Ovary (tissue), 10 donors: ENCODE measurements at regions of chr9 and their contacts with region 1.

Region 1: GRCh38 chr9:27333241-27334052 is 36.5 kb upstream of the EQTN start:
- DNase-seq: peak; percentile 66 to 71 (median 67)
- H3K4me3 ChIP-seq: no peak overlapping the region
- H3K27ac ChIP-seq: no peak overlapping the region
- H3K4me1 ChIP-seq: peaks cover 17% of the 10 kb centered on the region
- H3K27me3 ChIP-seq: no peaks in the 10 kb centered on the region
- CTCF ChIP-seq: peak; percentile 77 to 87 (median 83)
- EP300 ChIP-seq: no peak
- POLR2A ChIP-seq: no peak

Region 2: DNA sequence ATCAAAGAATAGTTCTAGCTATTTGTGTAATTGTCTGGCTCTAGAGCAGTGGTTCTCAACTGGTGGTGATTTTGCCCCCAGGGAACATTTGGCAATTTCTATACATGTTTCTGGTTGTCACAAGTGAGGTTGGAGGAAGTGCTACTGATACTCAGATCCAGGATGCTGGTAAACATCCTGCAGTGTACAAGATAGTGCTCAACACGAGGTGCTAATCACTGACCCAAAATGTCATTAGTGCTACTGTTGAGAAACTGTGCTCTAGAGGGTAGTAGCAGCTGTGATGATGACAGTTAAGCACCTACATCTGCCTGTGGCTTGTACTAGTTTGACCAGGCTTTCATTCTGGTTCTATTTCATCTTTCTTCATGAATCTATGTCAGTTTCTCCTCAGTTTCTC is 350.1 kb before region 1 on chr9:
- intact Hi-C with region 1: no loop called
- DNase-seq: no peak
- H3K4me3 ChIP-seq: no peak overlapping the region
- H3K27ac ChIP-seq: no peak overlapping the region
- H3K4me1 ChIP-seq: no peaks in the 10 kb centered on the region
- H3K27me3 ChIP-seq: no peaks in the 10 kb centered on the region
- CTCF ChIP-seq: no peak
- EP300 ChIP-seq: no peak
- POLR2A ChIP-seq: no peak

Region 3: GRCh38 chr9:27436234-27436633 is 102.8 kb after region 1 on chr9:
- intact Hi-C with region 1: loop called in 1 of 4 experiments (anchors 2 kb)
- DNase-seq: no peak
- H3K4me3 ChIP-seq: no peak overlapping the region
- H3K27ac ChIP-seq: peak overlapping the region in 1 of 2 donors; percentile 82
- H3K4me1 ChIP-seq: peaks cover 33% of the 10 kb centered on the region
- H3K27me3 ChIP-seq: no peaks in the 10 kb centered on the region
- CTCF ChIP-seq: no peak
- EP300 ChIP-seq: no peak
- POLR2A ChIP-seq: no peak

Region 4: GRCh38 chr9:27529316-27530278 is 196.2 kb after region 1 on chr9 and contains the start of gene MOB3B:
- intact Hi-C with region 1: loop called in 3 of 4 experiments (anchors 2 to 5 kb)
- DNase-seq: peak; percentile 85 to 93 (median 91)
- H3K4me3 ChIP-seq: peak within 1 kb of the TSS; percentile 68
- H3K27ac ChIP-seq: peak within 1 kb of the TSS; percentile 91 to 92
- H3K4me1 ChIP-seq: peaks cover 13% of the 10 kb centered on the region
- H3K27me3 ChIP-seq: no peaks in the 10 kb centered on the region
- CTCF ChIP-seq: peak; percentile 95 to 99 (median 98)
- EP300 ChIP-seq: no peak
- POLR2A ChIP-seq: peak; percentile 59
- total RNA-seq, gene MOB3B: 19.3 to 68.2 (median 28.1) TPM

Region 5: DNA sequence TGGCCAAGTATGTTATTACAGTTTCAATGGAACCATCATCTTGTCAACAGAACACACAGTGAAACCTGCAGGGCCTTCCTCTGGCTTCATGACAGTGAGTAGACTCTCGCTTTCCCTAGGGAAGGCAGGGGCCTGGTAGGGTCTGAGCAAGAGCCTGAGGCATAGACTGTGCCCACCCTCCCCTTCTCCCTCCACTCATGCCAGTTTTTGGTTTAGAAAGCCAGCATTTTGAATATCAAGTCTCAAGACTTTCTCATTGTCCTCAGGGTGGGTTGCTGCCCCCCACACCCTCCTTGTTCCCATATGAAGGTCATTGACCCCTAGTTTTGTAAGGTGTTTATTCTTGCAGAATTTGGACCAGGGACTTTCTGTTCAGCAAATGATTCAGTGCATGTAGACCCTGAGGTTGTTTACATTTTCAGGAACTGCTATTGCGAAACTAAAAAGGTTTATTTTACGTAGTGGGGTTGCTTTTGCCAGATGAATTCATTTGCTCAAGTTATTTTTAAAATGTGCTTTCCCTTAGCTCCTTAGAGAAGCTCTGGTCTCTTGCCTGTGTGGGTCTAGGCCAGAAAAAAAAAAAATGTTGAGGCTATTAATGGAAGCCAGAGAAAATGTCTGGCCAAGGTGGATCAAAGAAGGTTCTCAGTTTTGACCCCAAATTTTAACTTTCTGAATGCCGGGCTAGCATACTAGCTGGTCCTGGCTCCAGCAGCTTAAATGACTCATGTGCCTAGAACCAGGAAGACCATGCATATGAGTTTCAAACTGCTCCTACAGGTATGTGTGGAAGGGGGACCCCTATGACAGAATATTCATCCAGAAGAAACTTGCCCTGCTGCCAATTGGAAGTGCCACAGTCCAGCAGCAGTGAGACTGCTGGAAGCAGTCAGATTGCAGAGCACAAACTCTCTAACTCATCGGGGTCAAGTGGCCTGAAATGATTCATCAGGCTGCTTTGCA is 206.3 kb after region 1 on chr9:
- intact Hi-C with region 1: loop called in 1 of 4 experiments (anchors 5 kb)
- DNase-seq: peak; percentile 48 to 64 (median 58)
- H3K4me3 ChIP-seq: no peak overlapping the region
- H3K27ac ChIP-seq: peak overlapping the region; percentile 76 to 88
- H3K4me1 ChIP-seq: peaks cover 21% of the 10 kb centered on the region
- H3K27me3 ChIP-seq: no peaks in the 10 kb centered on the region
- CTCF ChIP-seq: no peak
- EP300 ChIP-seq: peak; percentile 70
- POLR2A ChIP-seq: no peak

Region 6: GRCh38 chr9:27548055-27548741 is 214.8 kb after region 1 on chr9:
- intact Hi-C with region 1: loop called in 2 of 4 experiments (anchors 2 to 5 kb)
- DNase-seq: no peak
- H3K4me3 ChIP-seq: no peak overlapping the region
- H3K27ac ChIP-seq: peak overlapping the region in 1 of 2 donors; percentile 36
- H3K4me1 ChIP-seq: peaks cover 2% of the 10 kb centered on the region
- H3K27me3 ChIP-seq: no peaks in the 10 kb centered on the region
- CTCF ChIP-seq: peak in 2 of 3 donors; percentile 52 to 68
- EP300 ChIP-seq: no peak
- POLR2A ChIP-seq: no peak

Region 7: GRCh38 chr9:27688954-27689353 is 355.5 kb after region 1 on chr9:
- intact Hi-C with region 1: loop called in 1 of 4 experiments (anchors 10 kb)
- DNase-seq: no peak
- H3K4me3 ChIP-seq: no peak overlapping the region
- H3K27ac ChIP-seq: no peak overlapping the region
- H3K4me1 ChIP-seq: no peaks in the 10 kb centered on the region
- H3K27me3 ChIP-seq: no peaks in the 10 kb centered on the region
- CTCF ChIP-seq: no peak
- EP300 ChIP-seq: no peak
- POLR2A ChIP-seq: no peak